HEK293 (cell line): ENCODE measurements at regions of chr1 and their contacts with region 1.

Region 1: GRCh38 chr1:8878448-8879347 is at the start of gene ENO1:
- H3K4me3 ChIP-seq: peak within 1 kb of the TSS; percentile 99
- H3K27ac ChIP-seq: peak within 1 kb of the TSS; percentile 91
- H3K4me1 ChIP-seq: peaks cover 16% of the 10 kb centered on the region
- CTCF ChIP-seq: no peak

Region 2: GRCh38 chr1:7845761-7846160 is 1032.9 kb before region 1 on chr1:
- CTCF ChIA-PET with region 1: no interaction called
- POLR2A ChIA-PET with region 1: interaction called, 11 read pairs
- H3K4me3 ChIP-seq: no peak overlapping the region
- H3K27ac ChIP-seq: no peak overlapping the region
- H3K4me1 ChIP-seq: no peaks in the 10 kb centered on the region
- CTCF ChIP-seq: no peak

Region 3: DNA sequence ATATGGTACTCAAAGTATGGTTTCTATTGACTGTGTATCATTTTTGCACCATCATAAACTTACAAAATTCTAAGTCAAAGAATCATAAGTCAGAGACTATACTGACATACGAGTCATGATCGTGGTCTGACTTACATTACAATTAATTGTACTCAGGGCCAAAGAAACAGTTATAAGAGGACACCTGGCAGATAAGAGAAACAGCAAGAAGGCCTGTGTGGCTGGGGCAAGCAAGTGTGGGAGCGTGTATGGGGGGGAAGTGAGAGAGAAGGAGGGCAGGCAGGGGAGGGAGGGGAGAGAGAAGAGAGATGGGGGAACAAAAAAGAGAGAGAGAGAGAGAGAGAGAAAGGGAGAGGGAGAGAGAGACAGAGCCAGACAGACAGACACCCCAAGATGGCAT is 132.1 kb before region 1 on chr1:
- CTCF ChIA-PET with region 1: no interaction called
- POLR2A ChIA-PET with region 1: no interaction called
- H3K4me3 ChIP-seq: no peak overlapping the region
- H3K27ac ChIP-seq: no peak overlapping the region
- H3K4me1 ChIP-seq: 0 out of 2 replicates have a peak, but pooled peaks cover 2% of the 10 kb centered on the region
- CTCF ChIP-seq: no peak

Region 4: DNA sequence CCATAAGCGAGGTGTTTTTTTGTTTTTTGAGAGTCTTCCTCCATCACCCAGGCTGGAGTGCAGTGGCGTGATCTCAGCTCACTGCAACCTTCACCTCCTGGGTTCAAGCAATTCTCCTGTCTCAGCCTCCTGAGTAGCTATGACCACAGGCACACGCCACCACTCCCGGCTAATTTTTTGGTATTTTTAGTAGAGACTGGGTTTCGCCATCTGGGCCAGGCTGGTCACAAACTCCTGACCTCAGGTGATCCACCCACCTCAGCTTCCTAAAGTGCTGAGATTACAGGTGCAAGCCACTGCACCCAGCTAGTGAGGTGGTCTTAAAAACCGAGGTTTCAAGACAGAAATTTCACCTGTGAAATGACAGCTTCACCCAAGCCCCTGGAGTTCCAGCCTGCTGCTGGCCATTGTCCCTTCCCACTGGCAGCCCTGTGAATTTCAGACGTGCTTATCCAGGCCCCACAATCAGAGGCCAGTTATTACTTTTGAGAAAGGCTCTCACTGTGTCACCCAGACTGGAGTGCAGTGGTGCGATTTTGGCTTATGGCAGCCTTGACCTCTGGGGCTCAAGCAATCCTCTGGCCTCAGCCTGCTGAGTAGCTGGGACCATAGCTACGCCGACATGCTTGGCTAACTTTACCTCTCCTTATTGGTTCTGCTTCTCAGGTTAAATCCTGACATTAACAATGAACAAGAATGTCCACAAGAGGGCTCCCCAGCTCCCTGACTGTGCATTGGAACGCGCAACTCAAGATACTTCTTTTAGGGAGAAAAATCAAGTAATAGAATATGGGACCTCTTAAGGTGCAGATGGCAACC is 19.6 kb before region 1 on chr1:
- CTCF ChIA-PET with region 1: interaction called, 9 read pairs
- POLR2A ChIA-PET with region 1: interaction called, 25 read pairs
- H3K4me3 ChIP-seq: no peak overlapping the region
- H3K27ac ChIP-seq: no peak overlapping the region
- H3K4me1 ChIP-seq: no peaks in the 10 kb centered on the region
- CTCF ChIP-seq: peak; percentile 59

Region 5: DNA sequence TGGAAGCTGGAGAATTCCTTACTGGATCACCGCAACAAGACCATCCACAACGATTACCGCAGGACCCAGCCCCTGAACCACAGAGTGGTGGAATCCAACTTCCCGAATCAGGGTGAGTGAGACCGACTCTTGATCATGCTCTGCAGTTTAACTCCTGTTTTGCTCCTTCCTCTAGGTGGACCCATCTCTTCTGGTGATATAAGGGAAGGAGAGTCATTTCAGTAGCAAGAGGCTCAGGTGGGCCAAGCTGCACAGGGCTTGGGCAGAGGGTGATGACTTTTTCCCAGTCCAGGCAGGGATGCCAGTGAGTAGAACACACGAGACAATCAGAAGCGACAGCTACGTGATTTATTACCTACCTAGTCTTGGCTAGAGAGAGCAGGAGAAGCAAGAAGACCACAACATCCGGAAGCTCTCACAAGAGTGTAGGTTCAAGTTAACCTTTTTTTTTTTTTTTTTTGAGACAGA is 92.2 kb after region 1 on chr1:
- CTCF ChIA-PET with region 1: no interaction called
- POLR2A ChIA-PET with region 1: no interaction called
- H3K4me3 ChIP-seq: no peak overlapping the region
- H3K27ac ChIP-seq: no peak overlapping the region
- H3K4me1 ChIP-seq: no peaks in the 10 kb centered on the region
- CTCF ChIP-seq: no peak

Region 6: DNA sequence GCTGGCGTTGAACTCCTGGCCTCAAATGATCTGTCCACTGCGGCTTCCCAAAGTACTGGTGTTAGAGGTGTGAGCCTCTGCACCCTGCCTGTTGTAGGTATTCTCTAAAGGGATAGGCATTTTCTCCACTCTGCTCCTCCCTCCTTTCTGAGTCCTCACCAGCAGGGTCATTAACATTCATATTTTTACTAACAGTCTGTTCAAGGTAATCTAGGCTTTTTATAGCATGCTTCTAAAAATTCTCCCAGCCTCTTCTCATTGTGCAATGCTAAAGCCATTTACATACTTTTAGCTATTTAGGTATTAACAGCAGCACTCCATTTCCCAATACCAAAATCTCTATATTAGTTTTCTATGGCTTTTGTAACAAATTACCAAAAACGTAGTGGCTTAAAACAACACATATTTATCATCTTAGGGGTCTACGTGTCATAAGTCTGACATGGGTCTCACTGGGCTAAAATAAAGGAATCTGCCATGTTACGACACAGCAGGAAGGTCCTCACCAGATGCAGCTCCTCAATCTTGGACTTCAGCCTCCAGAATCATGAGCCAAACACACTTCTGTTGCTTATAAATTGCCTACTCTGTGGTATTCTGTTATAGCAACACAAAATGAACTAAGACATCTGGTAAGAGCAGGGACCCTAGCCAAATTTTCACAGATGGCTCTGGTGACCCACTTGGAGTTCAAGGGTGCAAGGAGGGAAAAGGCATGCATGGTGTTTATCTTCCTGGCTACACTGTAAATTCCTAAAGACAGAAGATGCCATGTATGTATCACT is 150.4 kb after region 1 on chr1:
- CTCF ChIA-PET with region 1: no interaction called
- POLR2A ChIA-PET with region 1: no interaction called
- H3K4me3 ChIP-seq: no peak overlapping the region
- H3K27ac ChIP-seq: no peak overlapping the region
- H3K4me1 ChIP-seq: no peaks in the 10 kb centered on the region
- CTCF ChIP-seq: no peak

Region 7: GRCh38 chr1:9110669-9111356 is 232.1 kb after region 1 on chr1:
- CTCF ChIA-PET with region 1: interaction called, 10 read pairs
- POLR2A ChIA-PET with region 1: interaction called, 6 read pairs
- H3K4me3 ChIP-seq: no peak overlapping the region
- H3K27ac ChIP-seq: no peak overlapping the region
- H3K4me1 ChIP-seq: no peaks in the 10 kb centered on the region; the same call in 1 of the 2 replicates
- CTCF ChIP-seq: peak; percentile 85